Common myeloid progenitor, CD34-positive (primary cell): ENCODE measurements at regions of chr3 and their contacts with region 1.

Region 1: DNA sequence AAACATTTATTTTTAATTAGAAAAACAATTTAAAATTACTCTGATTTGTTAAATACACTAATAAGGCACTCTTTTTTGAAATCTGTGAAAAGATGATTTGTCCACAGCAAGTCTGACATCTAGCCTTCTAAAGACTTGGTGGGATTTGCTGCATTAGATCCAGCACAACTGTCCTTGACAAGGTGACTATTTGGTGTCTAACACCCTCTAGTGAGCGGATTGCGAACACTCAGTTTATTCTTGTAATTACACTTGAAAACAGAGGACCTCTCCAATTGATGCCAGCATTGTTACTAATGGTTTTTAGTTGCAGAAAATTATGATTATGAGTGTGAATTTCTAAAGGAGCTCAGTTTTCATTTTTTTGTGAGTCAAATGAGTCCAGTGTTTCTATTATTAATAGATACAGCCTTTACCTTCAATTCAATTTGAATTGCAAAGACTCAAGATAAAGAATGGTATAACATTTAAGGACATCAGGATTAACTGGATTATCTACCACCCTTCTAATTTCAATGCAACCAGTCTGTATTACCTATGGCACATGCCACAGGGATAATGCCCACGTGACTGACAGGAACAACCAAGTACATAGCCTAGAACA is 29.7 kb upstream of the STRIT1 start:
- DNase-seq: peak; percentile 73 to 87 (median 84)
- H3K4me3 ChIP-seq: no peak overlapping the region
- H3K27ac ChIP-seq: no peak overlapping the region
- H3K4me1 ChIP-seq: peaks cover 4 to 15% (median 12%) of the 10 kb centered on the region in 4 experiments
- H3K27me3 ChIP-seq: no peaks in the 10 kb centered on the region

Region 2: GRCh38 chr3:154758109-154758868 is 564.9 kb before region 1 on chr3:
- CTCF ChIA-PET with region 1: interaction called, 43 read pairs
- POLR2A ChIA-PET with region 1: no interaction called
- DNase-seq: peak; percentile 29 to 56 (median 56)
- H3K4me3 ChIP-seq: no peak overlapping the region
- H3K27ac ChIP-seq: no peak overlapping the region
- H3K4me1 ChIP-seq: no peaks in the 10 kb centered on the region
- H3K27me3 ChIP-seq: no peaks in the 10 kb centered on the region